GM23248 (cell line): ENCODE measurements at regions of chrX and their contacts with region 1.

Region 1: GRCh38 chrX:31658360-31658759 is 586.5 kb upstream of the FTHL17 start:
- DNase-seq: peak; percentile 52
- H3K4me3 ChIP-seq: no peak overlapping the region
- H3K27ac ChIP-seq: no peak overlapping the region
- H3K4me1 ChIP-seq: no peaks in the 10 kb centered on the region
- H3K27me3 ChIP-seq: 0 out of 2 replicates have a peak, but pooled peaks cover 3% of the 10 kb centered on the region

Region 2: DNA sequence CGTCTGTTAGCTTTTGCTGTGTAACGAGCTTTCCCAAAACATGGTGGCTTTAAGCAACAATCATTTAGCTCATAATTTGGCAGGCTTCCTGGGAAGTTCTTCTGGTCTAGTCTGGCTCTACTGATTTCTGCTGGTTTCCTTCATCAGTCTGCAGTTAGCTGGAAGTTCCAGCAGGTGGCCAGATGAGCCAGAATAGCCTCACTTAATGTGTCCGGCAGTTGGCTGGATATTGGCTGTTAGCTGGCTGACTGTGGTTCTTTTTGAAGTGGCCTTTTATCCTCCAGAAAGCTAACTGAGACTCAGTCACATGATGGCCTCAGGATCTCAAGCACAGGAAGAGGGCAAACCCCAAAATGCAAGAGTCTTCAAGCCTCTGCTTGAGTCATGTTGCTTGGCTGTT is 621.5 kb before region 1 on chrX:
- in situ Hi-C with region 1: loop called (anchors 10 kb)
- DNase-seq: peak; percentile 65
- H3K4me3 ChIP-seq: no peak overlapping the region
- H3K27ac ChIP-seq: no peak overlapping the region
- H3K4me1 ChIP-seq: no peaks in the 10 kb centered on the region
- H3K27me3 ChIP-seq: no peaks in the 10 kb centered on the region

Region 3: DNA sequence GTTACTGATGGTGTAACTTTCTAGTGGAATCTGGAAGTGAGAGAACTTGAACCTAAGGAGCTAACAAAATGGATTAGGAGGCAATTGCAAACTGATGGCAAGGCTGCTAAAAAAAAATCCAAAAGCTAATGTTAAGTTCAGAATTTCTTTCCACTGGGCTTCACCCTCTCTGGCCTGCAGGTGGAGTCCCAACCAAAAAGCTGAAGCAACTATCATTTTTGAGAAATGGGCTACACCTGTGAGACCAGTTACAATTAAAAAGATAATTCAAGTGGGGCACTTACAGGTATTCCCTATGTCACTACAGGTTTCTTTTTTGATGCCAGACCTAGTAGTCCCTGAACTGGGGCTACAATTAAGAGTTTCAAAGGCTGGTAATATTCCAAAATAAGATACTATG is 444.4 kb before region 1 on chrX:
- in situ Hi-C with region 1: loop called (anchors 25 kb)
- DNase-seq: peak; percentile 40
- H3K4me3 ChIP-seq: no peak overlapping the region
- H3K27ac ChIP-seq: no peak overlapping the region
- H3K4me1 ChIP-seq: no peaks in the 10 kb centered on the region
- H3K27me3 ChIP-seq: no peaks in the 10 kb centered on the region

Region 4: GRCh38 chrX:31287861-31288260 is 370.5 kb before region 1 on chrX:
- in situ Hi-C with region 1: loop called (anchors 10 kb)
- DNase-seq: no peak
- H3K4me3 ChIP-seq: no peak overlapping the region
- H3K27ac ChIP-seq: no peak overlapping the region
- H3K4me1 ChIP-seq: no peaks in the 10 kb centered on the region
- H3K27me3 ChIP-seq: no peaks in the 10 kb centered on the region